PC-9 (cell line): ENCODE measurements at regions of chr11 and their contacts with region 1.

Region 1: GRCh38 chr11:102007567-102008437 is 39.4 kb upstream of the CFAP300 start:
- DNase-seq: peak; percentile 46 to 99
- H3K4me3 ChIP-seq: 0 out of 2 replicates have a peak overlapping the region, but pooled peaks have one; percentile 6
- H3K27ac ChIP-seq: peak overlapping the region; percentile 90
- H3K4me1 ChIP-seq: peaks cover 68% of the 10 kb centered on the region
- H3K27me3 ChIP-seq: no peaks in the 10 kb centered on the region
- CTCF ChIP-seq: peak; percentile 88

Region 2: DNA sequence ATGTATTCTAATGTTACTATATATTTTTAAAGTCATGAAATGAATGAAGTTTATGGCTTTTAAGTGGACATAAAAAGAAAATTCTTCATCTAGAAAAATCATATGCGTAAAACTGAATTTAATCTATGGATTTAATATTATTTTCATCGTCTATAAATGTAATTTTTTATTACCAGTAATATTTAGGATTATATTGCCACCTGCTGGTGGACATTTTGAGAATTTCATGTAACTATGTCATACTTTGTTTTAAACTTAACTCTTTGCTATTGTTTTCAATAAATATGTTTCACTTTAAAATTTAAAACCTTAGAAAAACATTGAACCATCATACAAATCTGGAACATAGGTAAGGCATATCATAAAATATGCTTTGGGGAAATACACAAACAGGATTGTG is 159.5 kb before region 1 on chr11:
- CTCF ChIA-PET with region 1: interaction called, 4 read pairs
- POLR2A ChIA-PET with region 1: no interaction called
- intact Hi-C with region 1: loop called (anchors 2 kb)
- DNase-seq: no peak
- H3K4me3 ChIP-seq: no peak overlapping the region
- H3K27ac ChIP-seq: no peak overlapping the region
- H3K4me1 ChIP-seq: no peaks in the 10 kb centered on the region; the same call in 1 of the 2 replicates
- H3K27me3 ChIP-seq: no peaks in the 10 kb centered on the region
- CTCF ChIP-seq: peak; percentile 87

Region 3: GRCh38 chr11:101914738-101915426 is 92.9 kb before region 1 on chr11 and contains the start of gene CEP126:
- CTCF ChIA-PET with region 1: interaction called, 5 read pairs
- POLR2A ChIA-PET with region 1: no interaction called
- intact Hi-C with region 1: loop called (anchors 5 kb)
- DNase-seq: peak; percentile 84 to 91
- H3K4me3 ChIP-seq: peak within 1 kb of the TSS; percentile 69
- H3K27ac ChIP-seq: peak within 1 kb of the TSS; percentile 65
- H3K4me1 ChIP-seq: peaks cover 28% of the 10 kb centered on the region
- H3K27me3 ChIP-seq: no peaks in the 10 kb centered on the region
- CTCF ChIP-seq: peak; percentile 57; the same call in 1 of the 2 replicates
- total RNA-seq, gene CEP126: 3.7 and 6.0 TPM in 2 replicates

Region 4: DNA sequence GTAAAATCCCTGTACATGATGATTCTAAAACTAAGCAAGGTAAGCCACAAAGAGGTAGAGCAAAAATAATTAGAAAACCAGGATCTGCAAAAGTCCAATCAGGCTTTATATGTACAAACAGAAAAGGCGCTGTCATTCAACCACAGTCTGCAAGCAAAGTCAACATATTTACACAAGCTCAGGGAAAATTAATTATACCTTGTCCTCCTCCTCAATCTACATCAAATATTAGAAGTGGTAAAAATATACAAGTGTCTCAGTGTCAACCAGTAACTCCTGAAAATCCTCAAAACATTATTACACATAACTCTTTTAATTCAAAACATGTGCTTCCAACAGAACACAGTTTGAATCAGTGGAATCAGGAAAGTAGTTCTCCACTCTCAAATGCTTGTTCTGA is 44.6 kb before region 1 on chr11:
- CTCF ChIA-PET with region 1: no interaction called
- POLR2A ChIA-PET with region 1: no interaction called
- intact Hi-C with region 1: no loop called
- DNase-seq: no peak
- H3K4me3 ChIP-seq: no peak overlapping the region
- H3K27ac ChIP-seq: no peak overlapping the region
- H3K4me1 ChIP-seq: no peaks in the 10 kb centered on the region
- H3K27me3 ChIP-seq: no peaks in the 10 kb centered on the region
- CTCF ChIP-seq: no peak

Region 5: GRCh38 chr11:102177974-102178631 is 170.3 kb after region 1 on chr11:
- CTCF ChIA-PET with region 1: no interaction called
- POLR2A ChIA-PET with region 1: no interaction called
- intact Hi-C with region 1: loop called (anchors 1 kb)
- DNase-seq: peak; percentile 61 to 100
- H3K4me3 ChIP-seq: peak overlapping the region; percentile 10; the same call in 1 of the 2 replicates
- H3K27ac ChIP-seq: peak overlapping the region; percentile 88
- H3K4me1 ChIP-seq: peaks cover 41% of the 10 kb centered on the region
- H3K27me3 ChIP-seq: no peaks in the 10 kb centered on the region
- CTCF ChIP-seq: no peak

Region 6: DNA sequence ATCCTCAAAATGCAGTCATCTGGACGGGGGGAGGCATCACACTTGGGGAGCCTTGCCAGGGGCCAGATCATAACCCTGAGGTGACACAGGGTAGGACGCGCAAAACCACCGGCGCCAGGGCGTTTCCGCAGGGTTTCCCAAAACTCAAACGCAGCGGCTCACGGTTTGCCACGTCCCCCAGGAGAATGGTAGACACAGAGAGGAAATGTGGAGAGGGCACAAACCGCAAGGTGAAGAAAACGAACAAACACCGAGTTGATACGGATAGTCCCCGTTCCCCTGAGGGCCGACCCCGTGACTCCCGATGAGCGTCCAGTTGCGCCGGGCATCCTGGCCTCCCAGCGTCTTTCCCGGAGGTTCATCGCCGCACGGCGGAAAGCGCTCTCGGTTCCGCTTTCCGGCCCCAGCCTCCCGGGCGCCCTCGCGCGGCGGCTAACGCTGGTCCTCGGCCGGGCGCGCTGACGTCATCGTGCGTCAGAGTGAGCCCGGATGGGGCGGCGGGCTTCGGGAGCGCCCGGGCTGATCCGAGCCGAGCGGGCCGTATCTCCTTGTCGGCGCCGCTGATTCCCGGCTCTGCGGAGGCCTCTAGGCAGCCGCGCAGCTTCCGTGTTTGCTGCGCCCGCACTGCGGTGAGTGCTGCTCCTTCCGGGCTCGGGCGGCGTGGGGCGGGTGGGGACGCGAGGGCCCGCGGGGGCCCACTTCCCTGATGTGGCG is 339.1 kb after region 1 on chr11 and contains the start of gene BIRC2:
- CTCF ChIA-PET with region 1: no interaction called
- POLR2A ChIA-PET with region 1: no interaction called
- intact Hi-C with region 1: loop called (anchors 5 kb)
- DNase-seq: peak; percentile 85 to 96
- H3K4me3 ChIP-seq: peak within 1 kb of the TSS; percentile 69
- H3K27ac ChIP-seq: peak within 1 kb of the TSS; percentile 87
- H3K4me1 ChIP-seq: peaks cover 29% of the 10 kb centered on the region
- H3K27me3 ChIP-seq: no peaks in the 10 kb centered on the region
- CTCF ChIP-seq: peak; percentile 74
- total RNA-seq, gene BIRC2: 33.7 and 37.5 TPM in 2 replicates